ENCODE measurements at regions of chr1 and their contacts with region 1.

Region 1: GRCh38 chr1:244835276-244836134 is at the start of gene COX20:
- H3K4me3 ChIP-seq: peak within 1 kb of the TSS; percentile 91
- H3K27ac ChIP-seq: peak within 1 kb of the TSS; percentile 99
- H3K4me1 ChIP-seq: peaks cover 10% of the 10 kb centered on the region; the same call in 1 of the 2 replicates
- CTCF ChIP-seq: peak; percentile 89; the same call in 1 of the 2 replicates

Region 2: DNA sequence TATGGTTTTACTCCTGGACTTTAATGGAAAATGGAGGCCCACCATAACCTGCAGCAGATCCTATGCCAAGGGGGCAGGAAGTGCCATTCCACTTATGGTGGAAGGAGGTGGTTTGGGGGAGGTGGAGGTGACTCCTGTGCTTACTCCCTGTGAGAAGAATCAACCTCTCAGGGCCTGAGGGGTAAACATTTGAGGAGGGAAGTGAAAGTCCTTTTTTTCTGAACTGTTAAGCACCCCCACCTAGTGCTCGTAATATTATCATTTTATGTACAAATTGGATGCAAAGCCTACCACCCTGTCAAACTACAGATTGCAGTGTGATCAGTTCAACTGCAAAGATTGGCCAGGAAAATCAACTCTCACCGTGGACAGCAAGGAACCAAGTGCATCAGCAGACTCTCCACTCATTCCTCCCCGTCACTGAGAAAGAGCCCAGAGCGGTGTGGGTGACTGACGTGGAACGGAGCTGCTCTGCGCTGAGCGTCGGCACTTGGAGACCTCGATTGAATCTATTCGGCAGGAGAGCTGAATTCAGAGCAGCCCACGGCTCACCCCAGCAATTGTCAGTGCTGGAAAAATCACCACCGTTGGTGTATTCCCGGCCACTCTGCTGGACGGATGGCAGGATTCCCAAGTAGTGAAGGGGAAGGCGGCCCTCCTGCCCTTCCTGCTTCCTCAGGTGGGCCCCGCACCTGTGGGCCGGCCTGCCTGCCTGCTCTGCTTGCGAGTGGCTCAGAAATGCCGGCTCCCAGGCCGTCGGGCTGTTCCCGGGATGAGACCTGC is 46.8 kb before region 1 on chr1:
- CTCF ChIA-PET with region 1: no interaction called
- POLR2A ChIA-PET with region 1: no interaction called
- H3K4me3 ChIP-seq: no peak overlapping the region
- H3K27ac ChIP-seq: no peak overlapping the region
- H3K4me1 ChIP-seq: no peaks in the 10 kb centered on the region
- CTCF ChIP-seq: no peak

Region 3: GRCh38 chr1:244849189-244849866 is 13.8 kb after region 1 on chr1:
- CTCF ChIA-PET with region 1: interaction called, 6 read pairs
- POLR2A ChIA-PET with region 1: interaction called, 39 read pairs
- H3K4me3 ChIP-seq: no peak overlapping the region
- H3K27ac ChIP-seq: no peak overlapping the region
- H3K4me1 ChIP-seq: no peaks in the 10 kb centered on the region
- CTCF ChIP-seq: no peak

Region 4: GRCh38 chr1:244854865-244855578 is 19.5 kb after region 1 on chr1:
- CTCF ChIA-PET with region 1: interaction called, 4 read pairs
- POLR2A ChIA-PET with region 1: interaction called, 39 read pairs
- H3K4me3 ChIP-seq: no peak overlapping the region
- H3K27ac ChIP-seq: no peak overlapping the region
- H3K4me1 ChIP-seq: peaks cover 4% of the 10 kb centered on the region; the same call in 1 of the 2 replicates
- CTCF ChIP-seq: no peak

Region 5: GRCh38 chr1:244864253-244865027 is 28.9 kb after region 1 on chr1 and contains the start of gene HNRNPU:
- CTCF ChIA-PET with region 1: interaction called, 9 read pairs
- POLR2A ChIA-PET with region 1: interaction called, 98 read pairs
- H3K4me3 ChIP-seq: peak within 1 kb of the TSS; percentile 80
- H3K27ac ChIP-seq: peak within 1 kb of the TSS; percentile 100
- H3K4me1 ChIP-seq: peaks cover 16% of the 10 kb centered on the region
- CTCF ChIP-seq: peak; percentile 61

Region 6: GRCh38 chr1:244970661-244971551 is 135.4 kb after region 1 on chr1:
- CTCF ChIA-PET with region 1: interaction called, 3 read pairs
- POLR2A ChIA-PET with region 1: interaction called, 30 read pairs
- H3K4me3 ChIP-seq: peak overlapping the region; percentile 86
- H3K27ac ChIP-seq: peak overlapping the region; percentile 100
- H3K4me1 ChIP-seq: no peaks in the 10 kb centered on the region
- CTCF ChIP-seq: peak; percentile 99